H1 (cell line): ENCODE measurements at regions of chr5 and their contacts with region 1.

Region 1: DNA sequence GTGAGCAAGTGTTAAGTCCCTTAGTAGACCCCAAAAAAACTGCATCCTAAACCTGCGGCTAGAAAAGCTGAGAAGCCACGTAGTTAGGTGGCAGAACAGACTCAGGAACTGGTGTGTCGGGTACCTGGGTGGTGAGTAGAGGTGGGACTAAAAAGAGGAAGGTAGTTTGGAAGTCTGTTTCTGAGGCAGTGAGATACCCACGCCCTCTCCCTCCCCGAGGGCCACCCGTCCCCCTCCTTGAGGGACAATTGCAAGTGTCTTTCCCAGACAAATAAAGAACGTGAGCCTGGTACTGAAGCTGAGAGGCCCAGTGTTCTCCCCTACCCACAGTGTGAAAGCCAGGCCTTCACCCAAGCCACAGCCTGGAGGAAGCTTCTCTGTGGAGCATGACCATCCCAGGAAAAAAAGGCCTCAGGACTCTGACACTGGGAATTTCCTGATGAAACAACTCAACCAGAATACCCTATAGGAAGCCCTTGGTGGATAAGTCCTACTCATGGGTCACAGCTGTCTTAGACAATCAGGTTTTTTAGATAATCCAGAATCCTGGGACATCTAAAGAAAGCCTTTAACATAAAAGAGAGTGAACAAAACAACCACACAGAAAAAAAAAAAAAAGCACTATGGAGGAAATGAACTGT is 7.0 kb upstream of the CD74 start:
- DNase-seq: no peak
- H3K4me3 ChIP-seq: no peak overlapping the region
- H3K27ac ChIP-seq: no peak overlapping the region
- H3K4me1 ChIP-seq: no peaks in the 10 kb centered on the region
- H3K27me3 ChIP-seq: no peaks in the 10 kb centered on the region; a peak in 1 of 7 replicates
- CTCF ChIP-seq: no peak
- EP300 ChIP-seq: no peak
- POLR2A ChIP-seq: no peak
- RAD21 ChIP-seq: no peak

Region 2: GRCh38 chr5:150404121-150404520 is 15.6 kb before region 1 on chr5:
- CTCF ChIA-PET with region 1: interaction called, 48 read pairs
- POLR2A ChIA-PET with region 1: interaction called, 4 read pairs
- DNase-seq: no peak
- H3K4me3 ChIP-seq: no peak overlapping the region
- H3K27ac ChIP-seq: no peak overlapping the region
- H3K4me1 ChIP-seq: peaks cover 0 to 4% (median under 1%) of the 10 kb centered on the region in 4 experiments; a peak in 3 of 7 replicates
- H3K27me3 ChIP-seq: no peaks in the 10 kb centered on the region
- CTCF ChIP-seq: no peak
- EP300 ChIP-seq: no peak
- POLR2A ChIP-seq: no peak
- RAD21 ChIP-seq: no peak

Region 3: GRCh38 chr5:150436141-150436680 is 16.5 kb after region 1 on chr5:
- CTCF ChIA-PET with region 1: interaction called, 77 read pairs
- POLR2A ChIA-PET with region 1: interaction called, 6 read pairs
- DNase-seq: peak; percentile 75 to 97
- H3K4me3 ChIP-seq: no peak overlapping the region
- H3K27ac ChIP-seq: no peak overlapping the region
- H3K4me1 ChIP-seq: peaks cover 0 to 4% (median 1%) of the 10 kb centered on the region in 4 experiments; a peak in 2 of 7 replicates
- H3K27me3 ChIP-seq: no peaks in the 10 kb centered on the region
- CTCF ChIP-seq: peak; percentile 85 to 93 (median 88)
- EP300 ChIP-seq: no peak
- POLR2A ChIP-seq: no peak
- RAD21 ChIP-seq: peak; percentile 88 to 90

Region 4: DNA sequence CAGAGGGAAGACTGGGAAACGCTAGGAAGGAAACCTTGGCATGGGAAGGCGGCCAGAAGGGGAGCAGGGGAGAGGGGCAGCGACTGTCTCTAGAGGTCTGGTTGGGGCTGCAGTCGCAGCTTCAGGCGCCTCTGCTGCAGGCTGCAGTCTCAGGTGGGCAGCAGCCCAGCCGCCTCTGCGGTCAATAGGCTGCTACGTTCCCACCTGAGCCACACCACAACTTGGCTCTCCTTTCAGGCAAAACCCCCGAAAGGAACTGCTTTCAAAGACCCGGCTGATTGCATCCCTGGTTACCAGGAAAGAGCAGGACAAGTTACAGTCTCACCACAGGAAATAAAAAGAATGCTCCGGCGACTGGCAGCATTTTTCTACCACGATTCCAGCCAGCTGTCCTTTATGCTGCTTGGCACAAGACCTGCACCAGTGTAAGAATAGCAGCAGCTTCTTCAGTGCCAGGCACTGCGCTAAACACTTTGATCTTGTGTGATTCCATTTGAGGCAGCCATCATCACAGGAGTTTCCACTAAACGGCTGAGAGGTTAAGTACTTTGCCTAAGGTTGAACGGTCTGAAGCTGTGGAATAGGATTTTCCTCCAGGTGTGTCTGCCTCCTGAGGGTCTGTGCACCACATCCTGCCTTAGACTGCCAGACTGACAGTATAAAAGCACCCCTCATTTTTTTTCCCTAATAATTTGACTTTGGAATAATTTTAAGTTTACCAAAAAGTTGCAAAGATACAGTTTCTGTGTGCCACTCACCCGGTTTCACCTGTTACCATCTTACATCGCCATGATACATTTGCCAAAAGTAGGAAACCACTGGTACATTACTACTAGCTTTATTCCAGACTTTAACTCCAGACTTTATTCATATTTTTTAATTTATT is 22.3 kb after region 1 on chr5:
- CTCF ChIA-PET with region 1: interaction called, 77 read pairs
- POLR2A ChIA-PET with region 1: interaction called, 12 read pairs
- DNase-seq: peak in 1 of 2 experiments; percentile 60
- H3K4me3 ChIP-seq: no peak overlapping the region
- H3K27ac ChIP-seq: peak overlapping the region; percentile 8; the same call in 1 of the 2 replicates
- H3K4me1 ChIP-seq: peaks cover 0 to 7% (median 2%) of the 10 kb centered on the region in 4 experiments; a peak in 5 of 7 replicates
- H3K27me3 ChIP-seq: no peaks in the 10 kb centered on the region
- CTCF ChIP-seq: no peak
- EP300 ChIP-seq: no peak
- POLR2A ChIP-seq: peak in 1 of 2 experiments; percentile 60; a peak in 2 of 3 replicates
- RAD21 ChIP-seq: no peak

Region 5: DNA sequence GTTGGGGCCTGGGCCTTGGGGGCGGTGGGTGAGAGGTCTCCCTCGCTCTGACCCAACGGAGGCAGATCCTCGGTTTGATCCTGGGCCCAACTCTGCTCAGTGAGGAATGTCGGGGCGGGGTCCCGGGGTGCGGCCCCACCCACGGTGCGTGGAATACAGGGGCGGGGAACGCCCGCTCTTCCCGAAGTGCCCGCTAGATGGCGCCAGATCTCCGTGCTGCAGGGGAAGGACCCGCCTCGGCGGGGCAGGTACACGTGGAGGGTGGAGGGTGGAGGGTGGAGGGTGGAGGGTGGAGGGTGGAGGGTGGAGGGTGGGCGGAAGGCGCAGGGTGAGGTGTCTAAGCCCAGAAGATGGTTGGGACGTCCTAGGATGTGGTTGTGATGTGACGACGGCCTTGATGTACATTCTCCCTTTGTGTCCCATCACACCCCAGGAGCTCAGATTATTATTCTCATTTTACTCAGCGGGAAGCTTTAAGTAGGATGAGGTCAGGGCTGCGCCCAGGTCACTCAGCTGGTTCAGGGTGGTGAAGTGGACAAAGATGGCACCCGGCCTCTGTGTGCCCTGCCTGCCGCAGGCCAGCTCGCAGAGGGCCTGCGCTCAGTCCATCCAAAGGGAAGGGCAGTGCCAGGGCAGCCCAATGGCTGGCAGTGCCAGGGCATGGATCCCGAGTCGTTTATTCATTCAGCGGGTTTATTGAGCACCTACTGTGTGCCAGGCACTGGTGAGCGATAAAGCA is 39.2 kb after region 1 on chr5:
- CTCF ChIA-PET with region 1: no interaction called
- POLR2A ChIA-PET with region 1: no interaction called
- DNase-seq: peak in 1 of 2 experiments; percentile 99
- H3K4me3 ChIP-seq: peak overlapping the region in 1 of 4 experiments; percentile 47; a peak in 2 of 8 replicates
- H3K27ac ChIP-seq: no peak overlapping the region
- H3K4me1 ChIP-seq: peaks cover 4 to 20% (median 9%) of the 10 kb centered on the region in 4 experiments
- H3K27me3 ChIP-seq: no peaks in the 10 kb centered on the region
- CTCF ChIP-seq: peak; percentile 69 to 92 (median 89)
- EP300 ChIP-seq: 0 out of 3 replicates have a peak, but pooled peaks of 1 of the 2 experiments have one; percentile 3
- POLR2A ChIP-seq: no peak
- RAD21 ChIP-seq: peak; percentile 89 to 91